OCI-LY7 (cell line): ENCODE measurements at regions of chr2 and their contacts with region 1.

Region 1: GRCh38 chr2:233976690-233977294 is 59.6 kb downstream of the TRPM8 start:
- DNase-seq: peak; percentile 41
- H3K4me3 ChIP-seq: no peak overlapping the region
- H3K27ac ChIP-seq: no peak overlapping the region
- H3K4me1 ChIP-seq: no peaks in the 10 kb centered on the region
- CTCF ChIP-seq: peak; percentile 72

Region 2: DNA sequence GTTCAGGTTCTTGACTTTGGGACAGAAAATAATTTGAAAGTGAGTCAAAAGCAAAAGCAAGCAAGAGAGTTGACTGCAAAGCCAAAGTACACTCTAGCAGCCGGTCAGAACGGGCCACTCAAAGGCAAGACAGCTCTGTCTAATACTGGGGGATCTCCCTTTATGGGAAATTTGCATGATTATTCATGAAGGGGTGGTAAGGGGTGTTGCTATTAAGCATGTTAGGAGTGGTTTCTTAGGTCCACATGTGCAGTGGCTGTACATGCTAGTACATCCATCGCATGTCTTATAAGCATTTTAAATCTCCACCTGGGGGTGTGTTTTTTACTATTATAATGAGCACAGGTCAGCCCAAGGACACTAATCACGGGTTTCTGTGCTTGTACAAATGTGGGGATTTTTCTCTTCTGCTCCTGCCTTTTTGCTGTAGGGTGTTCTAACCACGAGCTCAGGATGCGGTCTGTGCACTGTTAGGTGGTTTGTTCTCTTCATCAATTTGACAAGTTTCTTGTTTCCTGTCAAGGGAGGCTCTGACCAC is 13.5 kb after region 1 on chr2:
- CTCF ChIA-PET with region 1: no interaction called
- POLR2A ChIA-PET with region 1: no interaction called
- intact Hi-C with region 1: no loop called
- DNase-seq: no peak
- H3K4me3 ChIP-seq: no peak overlapping the region
- H3K27ac ChIP-seq: no peak overlapping the region
- H3K4me1 ChIP-seq: no peaks in the 10 kb centered on the region
- CTCF ChIP-seq: no peak

Region 3: GRCh38 chr2:234544659-234545611 is 568.1 kb after region 1 on chr2:
- CTCF ChIA-PET with region 1: no interaction called
- POLR2A ChIA-PET with region 1: no interaction called
- intact Hi-C with region 1: loop called (anchors 5 kb)
- DNase-seq: peak; percentile 75
- H3K4me3 ChIP-seq: no peak overlapping the region
- H3K27ac ChIP-seq: no peak overlapping the region
- H3K4me1 ChIP-seq: no peaks in the 10 kb centered on the region
- CTCF ChIP-seq: peak; percentile 93